Posterior vena cava (tissue), 2 donors: ENCODE measurements at regions of chrX and their contacts with region 1.

Region 1: DNA sequence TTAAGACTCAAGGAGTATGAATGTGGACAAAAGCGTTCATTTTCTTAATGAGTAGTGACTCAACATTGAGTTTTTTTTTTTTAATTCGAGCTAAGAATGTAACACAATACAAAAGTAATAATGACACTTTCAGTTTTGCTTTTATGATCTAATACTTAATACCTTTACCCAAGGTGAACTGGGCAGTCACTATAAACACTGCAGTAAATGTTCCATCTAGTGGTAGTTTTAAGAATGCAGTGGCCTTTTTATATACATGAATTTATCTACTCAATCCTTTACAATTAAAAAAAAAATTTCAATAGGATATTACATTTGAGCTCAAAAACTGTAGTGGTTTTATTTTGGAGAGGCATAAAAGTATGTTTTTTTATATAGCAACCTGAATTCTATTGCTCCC is 33.9 kb downstream of the PDK3 start:
- DNase-seq: no peak

Region 2: GRCh38 chrX:24005028-24005427 is 493.9 kb before region 1 on chrX:
- intact Hi-C with region 1: loop called in 1 of 2 experiments (anchors 5 kb)
- DNase-seq: no peak

Region 3: DNA sequence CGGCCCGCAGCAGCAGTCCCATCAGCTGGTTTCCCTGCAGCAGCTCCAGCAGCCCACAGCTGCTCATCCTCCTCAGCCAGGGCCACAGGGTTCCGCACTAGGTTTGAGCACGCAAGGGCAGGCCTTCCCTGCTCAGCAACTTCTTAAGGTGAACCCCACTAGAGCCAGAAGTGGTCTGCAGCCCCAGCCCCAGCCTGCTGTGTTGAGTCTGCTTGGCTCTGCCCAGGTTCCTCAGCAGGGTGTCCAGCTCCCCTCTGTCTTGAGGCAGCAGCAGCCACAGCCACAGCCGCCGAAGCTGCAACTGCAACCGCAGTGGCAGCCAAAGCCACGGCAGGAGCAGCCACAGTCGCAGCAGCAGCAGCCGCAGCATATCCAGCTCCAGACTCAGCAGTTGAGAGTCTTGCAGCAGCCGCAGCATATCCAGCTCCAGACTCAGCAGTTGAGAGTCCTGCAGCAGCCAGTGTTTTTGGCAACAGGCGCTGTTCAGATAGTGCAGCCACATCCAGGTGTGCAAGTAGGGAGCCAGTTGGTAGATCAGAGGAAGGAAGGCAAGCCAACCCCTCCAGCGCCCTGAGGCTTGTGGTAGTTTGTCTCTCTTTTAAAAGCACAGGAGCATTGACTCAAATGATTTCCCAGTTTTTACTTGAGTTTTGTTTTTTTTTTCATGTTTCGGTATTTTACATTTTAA is 134.0 kb before region 1 on chrX:
- intact Hi-C with region 1: loop called in 1 of 2 experiments (anchors 10 kb)
- DNase-seq: no peak

Region 4: DNA sequence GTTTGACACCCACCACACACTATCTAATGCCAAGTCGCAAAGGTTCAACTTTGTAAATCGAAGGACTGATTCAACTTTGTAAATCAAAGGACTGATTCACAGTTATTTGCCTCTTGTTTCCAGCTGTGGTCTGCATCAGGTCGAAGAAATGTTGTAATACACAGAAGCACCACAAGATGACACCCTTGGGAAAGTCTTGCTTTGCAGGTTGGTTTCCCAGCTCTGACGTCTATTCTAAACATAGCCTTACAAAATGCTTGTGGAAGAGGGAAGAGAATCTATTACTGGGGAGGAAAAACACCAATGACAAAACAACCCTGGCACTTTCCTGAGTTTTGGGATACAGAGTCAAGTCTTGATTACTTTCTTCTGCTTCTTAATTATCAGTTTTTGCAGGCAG is 103.2 kb before region 1 on chrX:
- intact Hi-C with region 1: loop called (anchors 5 to 10 kb)
- DNase-seq: no peak